Prostate gland (tissue), 2 donors: ENCODE measurements at regions of chr5 and their contacts with region 1.

Region 1: GRCh38 chr5:123089914-123090670 is 1.1 kb downstream of the PRDM6 start:
- DNase-seq: no peak
- H3K4me3 ChIP-seq: peak overlapping the region; percentile 40
- H3K27ac ChIP-seq: peak overlapping the region in 1 of 2 donors; percentile 28
- H3K4me1 ChIP-seq: no peaks in the 10 kb centered on the region
- H3K27me3 ChIP-seq: peaks cover 48% of the 10 kb centered on the region
- CTCF ChIP-seq: no peak
- POLR2A ChIP-seq: no peak

Region 2: DNA sequence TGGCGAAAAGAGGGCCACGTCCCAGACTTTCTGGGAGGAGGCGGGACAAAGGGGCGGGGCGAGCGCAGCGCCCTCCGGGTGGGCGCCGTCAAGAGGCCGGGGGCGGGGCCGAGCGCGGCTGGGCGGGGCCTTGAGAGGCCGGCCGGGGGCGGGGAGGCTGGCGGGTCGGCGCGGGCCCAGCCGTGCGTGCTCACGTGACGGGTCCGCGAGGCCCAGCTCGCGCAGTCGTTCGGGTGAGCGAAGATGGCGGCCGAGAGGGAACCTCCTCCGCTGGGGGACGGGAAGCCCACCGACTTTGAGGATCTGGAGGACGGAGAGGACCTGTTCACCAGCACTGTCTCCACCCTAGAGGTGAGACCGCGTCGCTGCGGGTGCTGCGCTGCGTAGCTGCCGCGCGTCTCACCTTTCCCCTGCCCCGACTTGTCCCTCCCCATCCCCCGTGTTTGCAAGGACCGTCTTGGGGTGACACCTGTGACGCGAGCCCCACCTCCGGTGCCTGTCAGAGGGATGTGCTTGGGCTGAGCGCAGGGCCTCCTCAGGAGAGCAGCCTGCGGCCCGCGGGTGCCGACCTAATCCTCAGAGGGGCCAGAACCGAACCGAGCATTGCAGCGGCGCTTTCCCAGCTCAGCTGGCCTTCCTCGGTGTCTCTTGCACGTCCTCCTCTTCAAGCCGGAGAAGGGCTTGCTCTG is 315.1 kb before region 1 on chr5 and contains the start of gene SNX2:
- intact Hi-C with region 1: loop called (anchors 5 kb)
- DNase-seq: peak; percentile 93
- H3K4me3 ChIP-seq: peak within 1 kb of the TSS; percentile 87 to 93
- H3K27ac ChIP-seq: peak within 1 kb of the TSS; percentile 86 to 90
- H3K4me1 ChIP-seq: no peaks in the 10 kb centered on the region
- H3K27me3 ChIP-seq: no peaks in the 10 kb centered on the region
- CTCF ChIP-seq: peak in 2 of 4 experiments; percentile 6 to 19
- POLR2A ChIP-seq: peak; percentile 76
- total RNA-seq, gene SNX2: 50.6 to 63.7 TPM

Region 3: DNA sequence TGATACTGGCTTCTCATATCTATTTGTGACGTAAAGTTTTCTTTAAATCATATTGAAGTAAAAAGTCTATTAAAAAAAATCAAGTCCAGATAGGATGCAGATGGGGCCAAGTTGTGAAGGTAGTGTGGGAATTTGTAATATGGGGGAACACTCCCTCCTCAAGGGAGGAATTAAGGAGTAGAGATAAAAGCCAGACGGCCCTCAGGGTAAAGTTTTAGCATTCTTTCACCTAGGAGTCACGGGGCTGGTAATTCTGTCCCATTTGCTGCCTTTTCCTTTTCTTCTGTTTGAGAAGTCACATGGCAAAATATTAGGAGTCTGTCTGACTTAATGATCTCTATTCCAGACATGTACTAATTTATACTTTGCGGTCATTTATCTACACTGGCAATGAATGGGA is 182.9 kb before region 1 on chr5:
- intact Hi-C with region 1: loop called (anchors 10 kb)
- DNase-seq: no peak
- H3K4me3 ChIP-seq: no peak overlapping the region
- H3K27ac ChIP-seq: no peak overlapping the region
- H3K4me1 ChIP-seq: no peaks in the 10 kb centered on the region
- H3K27me3 ChIP-seq: no peaks in the 10 kb centered on the region
- CTCF ChIP-seq: no peak
- POLR2A ChIP-seq: no peak

Region 4: DNA sequence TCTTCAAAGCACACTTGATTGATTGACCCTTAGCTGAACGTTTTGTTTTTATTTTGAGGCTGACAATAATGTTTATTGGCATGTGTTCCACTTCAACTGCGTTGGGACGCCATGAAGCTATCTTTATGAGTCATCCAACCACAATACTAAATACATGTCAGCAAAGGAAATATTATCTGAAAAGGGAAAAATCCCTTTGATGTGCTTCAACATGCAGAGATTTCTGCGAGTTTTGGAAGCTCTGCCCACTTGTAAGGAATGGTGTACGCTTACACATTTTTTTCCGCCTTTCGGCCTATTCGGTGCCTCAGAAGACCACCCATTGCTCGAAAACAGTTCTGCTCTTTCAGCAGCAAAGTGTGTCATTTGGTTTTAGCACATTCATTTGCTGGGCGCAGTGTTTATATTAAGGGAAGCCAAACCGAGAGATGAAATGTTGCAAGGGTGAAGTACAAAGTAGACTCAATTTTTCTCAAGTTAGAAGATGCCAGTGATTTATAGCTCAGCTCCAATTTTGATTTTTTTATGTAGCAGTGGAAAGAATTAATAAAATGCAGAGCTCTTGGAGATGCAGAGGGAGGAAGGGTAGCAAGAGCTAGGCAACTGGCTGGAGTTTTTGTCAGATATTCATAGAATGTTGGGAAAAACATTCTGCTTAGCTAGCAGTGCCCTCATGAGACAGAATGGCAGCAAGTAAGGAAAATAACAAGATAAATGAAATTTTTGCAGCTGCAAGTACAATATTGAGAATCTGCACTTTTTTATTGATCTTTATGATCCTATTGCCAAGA is 67.9 kb after region 1 on chr5:
- intact Hi-C with region 1: loop called (anchors 5 kb)
- DNase-seq: no peak
- H3K4me3 ChIP-seq: no peak overlapping the region
- H3K27ac ChIP-seq: peak overlapping the region in 1 of 2 donors; percentile 38
- H3K4me1 ChIP-seq: peaks cover 2% of the 10 kb centered on the region
- H3K27me3 ChIP-seq: no peaks in the 10 kb centered on the region
- CTCF ChIP-seq: no peak
- POLR2A ChIP-seq: no peak

Region 5: DNA sequence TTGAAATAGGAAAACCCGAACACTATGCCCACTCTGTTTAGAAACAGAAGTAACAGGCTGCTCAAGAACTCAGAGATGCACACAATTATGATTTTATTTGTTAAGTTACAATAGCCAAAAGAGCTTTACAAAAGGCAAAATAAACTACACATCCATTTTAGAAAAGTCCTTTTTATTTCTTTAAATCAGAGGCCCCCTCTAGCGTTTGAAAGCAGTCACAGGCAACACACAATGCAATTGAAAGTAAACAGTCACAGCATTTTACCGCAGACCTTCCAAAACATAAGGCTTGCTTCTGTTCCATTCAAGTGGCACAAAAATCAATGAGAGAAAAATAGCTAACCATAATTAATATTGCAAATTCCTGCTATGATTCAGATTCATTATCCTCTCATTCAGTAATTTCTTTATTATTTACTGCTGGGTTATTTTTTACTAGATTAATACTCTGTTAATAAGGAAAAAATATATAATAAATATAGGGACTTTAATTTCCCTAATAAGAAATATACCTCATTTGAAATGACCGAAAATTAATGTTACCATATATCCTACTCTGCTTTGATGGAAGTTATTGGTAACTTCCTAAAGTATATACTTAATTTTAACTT is 254.8 kb after region 1 on chr5:
- intact Hi-C with region 1: loop called (anchors 10 kb)
- DNase-seq: peak; percentile 10
- H3K4me3 ChIP-seq: no peak overlapping the region
- H3K27ac ChIP-seq: no peak overlapping the region
- H3K4me1 ChIP-seq: no peaks in the 10 kb centered on the region
- H3K27me3 ChIP-seq: no peaks in the 10 kb centered on the region
- CTCF ChIP-seq: peak in 3 of 4 experiments; percentile 46 to 64 (median 58)
- POLR2A ChIP-seq: no peak